Adrenal gland (tissue), 19 donors: ENCODE measurements at regions of chr3 and their contacts with region 1.

Region 1: GRCh38 chr3:154095832-154096421 is 25.3 kb upstream of the ARHGEF26 start:
- DNase-seq: no peak
- H3K4me3 ChIP-seq: no peak overlapping the region
- H3K27ac ChIP-seq: no peak overlapping the region
- H3K4me1 ChIP-seq: no peaks in the 10 kb centered on the region
- H3K27me3 ChIP-seq: no peaks in the 10 kb centered on the region
- CTCF ChIP-seq: peak in 2 of 6 experiments; percentile 37 to 41
- POLR2A ChIP-seq: no peak

Region 2: DNA sequence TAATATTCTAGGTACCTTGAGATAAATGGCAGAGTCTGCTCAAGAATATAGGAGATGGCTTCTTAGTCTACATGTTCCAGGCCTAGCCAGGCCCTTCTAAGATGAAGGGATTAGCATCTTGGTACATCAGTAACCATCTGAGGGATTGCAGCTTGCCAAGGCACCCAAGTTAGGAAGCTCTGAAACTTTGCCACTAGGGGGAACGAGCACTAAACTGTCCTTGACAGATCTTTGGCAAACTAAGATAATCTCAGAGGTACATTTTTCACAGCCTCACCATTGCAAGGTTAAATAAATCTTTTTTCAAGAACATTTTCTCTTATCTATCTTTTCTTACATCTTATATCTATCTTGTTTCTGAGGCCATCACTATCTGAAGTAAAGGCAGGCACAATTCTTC is 582.7 kb before region 1 on chr3:
- intact Hi-C with region 1: no loop called
- DNase-seq: no peak
- H3K4me3 ChIP-seq: no peak overlapping the region
- H3K27ac ChIP-seq: no peak overlapping the region
- H3K4me1 ChIP-seq: no peaks in the 10 kb centered on the region
- H3K27me3 ChIP-seq: no peaks in the 10 kb centered on the region
- CTCF ChIP-seq: no peak
- POLR2A ChIP-seq: no peak

Region 3: DNA sequence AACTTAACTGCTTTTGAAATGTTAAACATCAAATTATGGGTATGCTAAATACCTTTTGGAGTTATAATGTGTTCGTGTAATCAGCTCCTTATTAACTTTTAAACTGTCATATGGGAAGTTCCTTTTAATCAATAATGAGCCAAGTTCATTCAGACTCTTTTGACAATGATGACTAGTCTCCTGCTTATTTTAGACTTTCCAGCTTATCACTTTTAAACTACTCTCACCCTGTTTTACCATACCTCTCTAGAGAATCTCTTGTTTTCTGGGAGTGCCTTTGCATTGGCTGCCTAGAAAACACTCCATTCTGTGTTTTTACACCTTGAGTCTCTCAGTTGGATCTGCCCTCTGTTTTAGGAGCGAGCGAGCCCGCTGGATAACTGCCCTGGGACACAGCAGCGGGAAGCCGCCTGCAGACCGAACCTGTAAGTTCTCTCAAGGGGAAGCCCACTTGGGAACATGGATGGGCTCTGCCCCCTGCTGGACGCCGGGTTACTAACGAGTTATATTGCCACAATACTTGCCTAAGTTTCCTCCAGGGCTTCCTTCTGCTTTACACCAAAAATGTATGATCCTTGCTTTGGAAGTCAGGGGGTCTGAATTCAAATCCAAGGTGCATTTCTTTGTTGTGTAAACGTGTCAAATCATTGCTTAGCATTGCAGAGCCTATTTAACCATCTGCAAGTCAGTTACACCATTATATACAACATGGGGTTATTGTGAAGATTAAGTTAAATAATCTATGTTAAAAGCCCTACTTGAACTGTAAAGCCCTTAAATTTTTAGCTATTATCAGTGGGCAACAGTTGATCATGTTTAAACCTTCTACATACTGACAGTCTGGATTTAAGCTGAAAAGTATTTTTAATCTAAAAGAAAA is 157.1 kb after region 1 on chr3:
- intact Hi-C with region 1: loop called in 1 of 2 experiments (anchors 5 kb)
- DNase-seq: peak; percentile 81 to 96 (median 89)
- H3K4me3 ChIP-seq: no peak overlapping the region
- H3K27ac ChIP-seq: no peak overlapping the region
- H3K4me1 ChIP-seq: peaks cover 0 to 5% of the 10 kb centered on the region in 2 donors
- H3K27me3 ChIP-seq: no peaks in the 10 kb centered on the region
- CTCF ChIP-seq: peak; percentile 71 to 88 (median 82)
- POLR2A ChIP-seq: no peak

Region 4: GRCh38 chr3:154384479-154384878 is 288.6 kb after region 1 on chr3:
- intact Hi-C with region 1: no loop called
- DNase-seq: no peak
- H3K4me3 ChIP-seq: no peak overlapping the region
- H3K27ac ChIP-seq: no peak overlapping the region
- H3K4me1 ChIP-seq: no peaks in the 10 kb centered on the region
- H3K27me3 ChIP-seq: peaks cover 3% of the 10 kb centered on the region
- CTCF ChIP-seq: no peak
- POLR2A ChIP-seq: no peak